GM10248 (cell line): ENCODE measurements at regions of chr12 and their contacts with region 1.

Region 1: DNA sequence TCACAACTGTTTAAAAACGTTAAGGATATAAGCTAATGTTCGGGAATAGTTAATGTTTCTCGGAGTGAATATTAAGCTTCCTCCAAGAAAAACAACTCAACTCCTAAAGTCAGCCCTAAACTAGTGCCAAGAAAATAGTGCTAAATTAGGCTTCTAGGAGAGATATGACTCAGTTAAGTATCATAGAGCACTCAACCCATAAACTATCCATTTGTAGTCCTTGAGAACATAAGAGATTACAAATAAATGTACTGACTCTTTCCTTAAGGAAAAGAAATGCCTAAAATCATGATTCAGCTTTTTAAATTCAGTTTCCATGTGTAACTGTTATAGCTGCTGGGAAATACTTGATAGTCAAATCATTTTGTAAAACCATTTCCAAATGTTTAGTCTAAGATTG is 117.1 kb downstream of the HMGA2 start:
- DNase-seq: no peak
- CTCF ChIP-seq: no peak

Region 2: GRCh38 chr12:65923228-65923627 is 18.2 kb before region 1 on chr12:
- CTCF ChIA-PET with region 1: interaction called, 35 read pairs
- POLR2A ChIA-PET with region 1: no interaction called
- DNase-seq: peak; percentile 39
- CTCF ChIP-seq: peak; percentile 18

Region 3: GRCh38 chr12:65997056-65997455 is 55.7 kb after region 1 on chr12:
- CTCF ChIA-PET with region 1: no interaction called
- POLR2A ChIA-PET with region 1: no interaction called
- DNase-seq: no peak
- CTCF ChIP-seq: no peak